Activated CD8-positive, alpha-beta T cell treated with anti-CD3 and anti-CD28 coated beads, Interleukin-2, amount 10 ng/mL, durations not matched to agents 7 days and 5 days (primary cell): ENCODE measurements at regions of chr1 and their contacts with region 1.

Region 1: GRCh38 chr1:52424231-52424636 is 19.8 kb downstream of the PRPF38A start:
- DNase-seq: peak; percentile 49
- ATAC-seq: peak; percentile 89
- H3K4me3 Mint-ChIP-seq: peak overlapping the region; percentile 61
- H3K27ac Mint-ChIP-seq: peak overlapping the region; percentile 94
- H3K4me1 Mint-ChIP-seq: peaks cover 43% of the 10 kb centered on the region
- H3K27me3 Mint-ChIP-seq: no peaks in the 10 kb centered on the region

Region 2: GRCh38 chr1:52306227-52307006 is 117.8 kb before region 1 on chr1:
- CTCF ChIA-PET with region 1: no interaction called
- POLR2A ChIA-PET with region 1: no interaction called
- DNase-seq: no peak
- ATAC-seq: peak; percentile 36
- H3K4me3 Mint-ChIP-seq: no peak overlapping the region
- H3K27ac Mint-ChIP-seq: no peak overlapping the region
- H3K4me1 Mint-ChIP-seq: no peaks in the 10 kb centered on the region
- H3K27me3 Mint-ChIP-seq: no peaks in the 10 kb centered on the region

Region 3: DNA sequence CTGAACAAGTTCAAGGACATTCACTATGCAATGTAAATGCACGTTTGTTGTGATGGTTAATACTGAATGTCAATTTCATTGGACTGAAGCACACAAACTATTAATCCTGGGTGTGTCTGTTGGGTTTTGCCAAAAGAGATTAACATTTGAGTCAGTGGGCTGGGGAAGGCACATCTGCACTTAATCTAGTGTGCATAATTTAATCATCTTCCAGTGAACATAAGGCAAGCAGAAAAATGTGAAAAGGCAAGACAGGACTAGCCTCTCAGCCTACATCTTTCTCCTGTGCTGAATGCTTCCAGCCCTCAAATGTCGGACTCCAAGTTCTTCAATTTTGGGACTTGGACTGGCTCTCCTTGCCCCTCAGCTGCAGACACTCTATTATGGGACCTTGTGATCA is 20.2 kb after region 1 on chr1:
- CTCF ChIA-PET with region 1: no interaction called
- POLR2A ChIA-PET with region 1: no interaction called
- DNase-seq: no peak
- ATAC-seq: no peak
- H3K4me3 Mint-ChIP-seq: no peak overlapping the region
- H3K27ac Mint-ChIP-seq: no peak overlapping the region
- H3K4me1 Mint-ChIP-seq: no peaks in the 10 kb centered on the region
- H3K27me3 Mint-ChIP-seq: no peaks in the 10 kb centered on the region

Region 4: GRCh38 chr1:52552505-52553361 is 128.5 kb after region 1 on chr1 and contains the start of gene TUT4:
- CTCF ChIA-PET with region 1: interaction called, 3 read pairs
- POLR2A ChIA-PET with region 1: interaction called, 11 read pairs
- DNase-seq: peak; percentile 82
- ATAC-seq: peak; percentile 68
- H3K4me3 Mint-ChIP-seq: peak within 1 kb of the TSS; percentile 65
- H3K27ac Mint-ChIP-seq: peak within 1 kb of the TSS; percentile 61
- H3K4me1 Mint-ChIP-seq: peaks cover 23% of the 10 kb centered on the region
- H3K27me3 Mint-ChIP-seq: peaks cover 10% of the 10 kb centered on the region
- total RNA-seq, gene TUT4: 58.5 to 65.9 TPM

Region 5: DNA sequence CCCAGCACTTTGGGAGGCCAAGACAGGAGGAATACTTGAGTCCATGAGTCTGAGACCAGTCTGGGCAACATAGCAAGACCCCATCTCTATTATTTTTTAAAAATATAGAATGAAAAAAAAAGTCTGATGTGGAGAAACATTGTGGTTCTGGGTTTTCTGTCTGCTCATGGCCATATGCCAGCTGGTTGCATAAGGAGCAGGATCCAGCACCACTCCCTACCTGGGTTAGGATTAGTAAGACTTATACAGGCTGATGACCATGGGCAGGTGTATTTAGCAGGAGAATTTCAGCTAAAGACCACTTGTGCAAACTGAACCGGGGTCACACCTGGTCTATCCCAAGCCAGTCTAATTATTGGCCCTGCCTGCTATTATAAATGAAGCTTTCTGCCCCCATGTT is 161.2 kb after region 1 on chr1:
- CTCF ChIA-PET with region 1: no interaction called
- POLR2A ChIA-PET with region 1: no interaction called
- DNase-seq: no peak
- ATAC-seq: no peak
- H3K4me3 Mint-ChIP-seq: no peak overlapping the region
- H3K27ac Mint-ChIP-seq: no peak overlapping the region
- H3K4me1 Mint-ChIP-seq: no peaks in the 10 kb centered on the region
- H3K27me3 Mint-ChIP-seq: no peaks in the 10 kb centered on the region

Region 6: GRCh38 chr1:52683367-52683940 is 259.2 kb after region 1 on chr1:
- CTCF ChIA-PET with region 1: interaction called, 17 read pairs
- POLR2A ChIA-PET with region 1: interaction called, 3 read pairs
- DNase-seq: no peak
- ATAC-seq: no peak
- H3K4me3 Mint-ChIP-seq: no peak overlapping the region
- H3K27ac Mint-ChIP-seq: peak overlapping the region; percentile 16
- H3K4me1 Mint-ChIP-seq: peaks cover 11% of the 10 kb centered on the region
- H3K27me3 Mint-ChIP-seq: no peaks in the 10 kb centered on the region